Head of caudate nucleus (tissue), 42 donors: ENCODE measurements at regions of chr2 and their contacts with region 1.

Region 1: DNA sequence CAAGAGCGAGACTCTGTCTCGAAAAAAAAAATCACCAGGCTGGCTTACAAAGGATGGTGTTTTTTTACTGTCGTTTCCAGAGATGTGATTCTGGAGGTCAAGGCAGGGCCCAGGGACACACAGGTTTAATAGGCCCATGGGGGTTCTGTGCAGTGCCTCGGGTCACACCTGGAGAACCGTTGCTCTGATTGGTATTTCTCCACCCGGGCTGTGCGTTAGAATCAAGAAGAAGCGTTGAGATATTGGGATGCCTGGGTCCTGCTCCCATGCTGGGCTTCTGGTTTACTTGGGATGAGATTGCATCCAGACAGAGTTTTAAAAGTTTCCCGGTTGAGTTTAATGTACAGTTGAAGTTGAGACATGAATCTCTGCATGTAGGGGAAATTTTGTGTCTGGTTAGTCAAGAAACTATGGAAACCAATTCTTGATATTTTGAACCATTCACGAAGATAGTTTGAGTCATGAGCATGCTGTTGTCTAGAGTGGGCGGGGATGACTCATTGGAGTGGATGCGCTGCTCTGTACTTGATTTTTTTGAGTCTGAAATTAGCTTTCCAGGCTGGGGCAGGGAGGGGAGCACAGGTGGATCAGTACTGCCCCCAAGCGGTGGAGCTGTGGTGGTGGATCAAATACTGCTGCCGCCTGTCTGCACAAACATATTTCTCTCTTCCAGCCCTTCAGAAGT is 50.1 kb downstream of the GREB1 start:
- DNase-seq: peak; percentile 74 to 95 (median 88)

Region 2: GRCh38 chr2:11097038-11097720 is 486.8 kb before region 1 on chr2:
- intact Hi-C with region 1: no loop called
- DNase-seq: peak in 5 of 42 donors; percentile 15 to 43 (median 24)

Region 3: DNA sequence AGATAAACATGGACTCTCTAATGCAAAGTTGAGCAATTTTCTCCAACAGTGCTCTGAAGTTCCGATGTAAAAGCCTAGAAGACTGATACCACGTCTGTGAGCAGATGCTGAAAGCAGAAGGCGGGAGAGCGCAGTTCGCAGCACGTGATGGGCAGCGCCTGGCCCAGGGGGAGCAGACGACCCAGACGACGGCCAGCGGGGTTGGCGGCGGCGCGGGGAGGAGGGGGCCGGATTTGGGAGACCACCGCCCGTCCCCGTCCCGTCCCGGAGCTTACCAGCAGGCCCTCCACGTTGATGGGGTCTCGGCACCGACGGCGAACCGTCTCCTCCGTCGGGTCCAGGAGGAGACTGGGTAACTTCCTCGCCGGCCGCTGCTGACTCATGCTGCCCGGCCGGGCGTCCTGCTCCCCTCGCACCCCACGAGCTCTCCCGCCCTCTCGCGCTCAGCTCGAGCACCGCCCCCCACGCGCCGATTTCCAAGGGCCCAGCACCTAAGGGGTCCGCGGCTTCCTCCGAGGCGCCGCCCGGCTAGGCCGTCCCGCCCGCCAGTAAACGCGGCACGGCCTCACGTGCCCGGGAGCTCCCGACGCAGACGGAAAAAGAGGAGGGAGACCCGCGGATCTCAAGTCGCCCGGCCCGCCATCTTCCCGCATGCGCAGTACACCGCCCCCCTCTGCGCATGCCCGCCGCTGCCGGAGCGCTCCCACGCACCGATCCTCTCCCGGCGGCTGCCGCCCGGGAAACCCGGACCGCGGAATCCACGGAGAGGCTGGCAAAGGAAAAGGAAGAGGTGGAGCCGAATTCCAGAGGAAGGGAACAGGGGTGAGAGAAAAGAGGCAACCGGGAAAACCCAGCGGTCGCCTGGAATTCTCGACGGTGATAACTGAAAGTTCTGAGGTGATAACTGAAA is 118.2 kb before region 1 on chr2 and contains the start of gene E2F6:
- intact Hi-C with region 1: no loop called
- DNase-seq: peak; percentile 80 to 97 (median 93)

Region 4: DNA sequence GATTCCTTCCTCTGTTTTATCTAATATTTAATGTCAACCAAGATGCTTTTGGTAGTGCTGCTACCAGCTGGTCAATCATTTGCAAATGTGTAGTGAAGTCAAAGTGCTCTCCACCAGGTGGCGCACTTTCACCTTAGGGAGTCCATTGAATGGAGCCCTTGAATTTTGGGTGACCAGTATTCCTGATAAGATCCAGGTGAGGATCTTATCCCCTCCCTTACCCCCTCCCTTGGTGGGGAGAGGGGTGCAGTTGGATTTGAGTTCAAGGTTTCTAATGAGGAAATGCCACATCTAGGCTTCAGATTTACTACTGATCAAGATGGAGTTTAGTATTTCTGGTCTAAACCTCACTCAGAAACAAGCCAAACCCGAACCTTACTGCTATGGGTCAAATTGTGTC is 106.0 kb before region 1 on chr2:
- intact Hi-C with region 1: loop called (anchors 2 kb)
- DNase-seq: peak; percentile 79 to 99 (median 95)

Region 5: GRCh38 chr2:11784747-11785610 is 201.0 kb after region 1 on chr2:
- intact Hi-C with region 1: no loop called
- DNase-seq: peak; percentile 37 to 88 (median 74)

Region 6: GRCh38 chr2:11863513-11864328 is 279.7 kb after region 1 on chr2:
- intact Hi-C with region 1: no loop called
- DNase-seq: peak; percentile 68 to 93 (median 83)